ENCODE measurements at regions of chr5 and their contacts with region 1.

Region 1: DNA sequence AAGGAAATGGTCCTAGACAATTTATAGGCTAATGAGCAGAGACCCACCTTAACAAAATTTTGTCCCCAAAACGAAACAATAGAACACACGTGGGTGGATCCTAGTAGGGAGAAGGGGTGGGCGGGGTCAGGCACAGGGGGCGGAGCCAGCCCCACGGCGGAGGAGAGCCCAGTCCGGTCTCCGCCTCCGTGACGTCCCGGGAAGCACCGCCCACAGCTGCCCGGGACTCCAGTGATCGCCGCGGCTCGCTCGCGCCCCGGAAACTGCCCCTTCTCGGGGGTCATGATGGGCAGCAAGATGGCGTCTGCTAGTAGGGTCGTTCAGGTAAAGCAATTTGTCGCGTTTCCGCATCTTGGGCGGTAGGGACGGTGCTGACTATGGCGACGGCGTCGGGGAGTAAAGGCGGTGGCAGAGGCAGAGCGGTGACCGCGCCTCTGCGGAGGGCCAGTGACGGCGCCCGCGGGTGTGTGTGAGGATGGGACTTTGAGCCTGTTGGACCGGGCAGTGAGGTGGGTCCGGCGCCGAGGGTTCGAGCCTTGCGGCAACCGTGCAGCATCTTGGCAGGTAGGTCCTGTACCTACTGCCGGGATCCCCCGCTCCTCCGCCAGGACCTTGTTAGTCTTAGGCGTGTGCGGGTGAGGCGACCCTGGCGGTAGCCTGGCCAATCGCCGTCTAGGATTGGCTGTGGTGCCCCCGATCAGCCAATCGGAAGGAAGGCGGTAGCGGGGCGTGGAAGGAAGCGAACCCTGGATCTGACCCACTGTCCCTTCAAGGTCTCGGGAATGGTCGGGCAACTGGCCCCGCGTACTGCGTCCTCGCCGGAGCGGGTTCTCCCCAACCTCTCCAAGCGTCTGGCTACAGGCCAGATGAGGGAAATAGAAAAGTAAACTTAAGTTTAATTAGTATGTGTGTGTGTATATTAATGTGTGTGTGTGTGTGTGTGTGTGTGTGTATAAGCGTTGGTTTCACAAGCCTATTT is 16.8 kb upstream of the CDK7 start:
- DNase-seq: peak; percentile 72
- ATAC-seq: peak; percentile 97
- H3K4me3 ChIP-seq: peak overlapping the region; percentile 88
- H3K27ac ChIP-seq: peak overlapping the region; percentile 92
- H3K4me1 ChIP-seq: peaks cover 4% of the 10 kb centered on the region; the same call in 1 of the 2 replicates
- H3K27me3 ChIP-seq: no peaks in the 10 kb centered on the region
- CTCF ChIP-seq: peak in 1 of 3 experiments; percentile 5; a peak in 1 of 6 replicates
- EP300 ChIP-seq: no peak
- POLR2A ChIP-seq: peak; percentile 97
- RAD21 ChIP-seq: no peak

Region 2: DNA sequence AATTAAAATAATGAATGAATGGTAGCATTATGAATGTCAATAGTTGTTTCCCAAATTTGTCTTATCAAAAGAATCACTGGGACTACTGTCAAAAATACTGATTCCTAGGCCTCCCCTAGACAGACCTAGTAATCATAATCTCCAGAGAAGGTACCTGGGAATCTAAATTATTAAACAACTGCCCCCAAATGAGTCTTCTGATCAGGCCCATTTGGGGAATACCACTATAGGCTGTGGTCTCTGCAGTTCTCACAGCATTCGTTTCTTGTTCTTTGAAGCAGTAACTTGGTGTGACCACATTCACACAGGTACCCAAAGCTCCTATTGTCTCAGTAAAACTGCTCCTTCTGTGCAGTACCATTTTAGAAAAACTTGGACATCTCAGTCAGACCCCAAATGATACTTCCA is 771.3 kb before region 1 on chr5:
- CTCF ChIA-PET with region 1: no interaction called
- POLR2A ChIA-PET with region 1: no interaction called
- RAD21 ChIA-PET with region 1: no interaction called
- SMC1A ChIA-PET with region 1: no interaction called
- in situ Hi-C with region 1: no loop called
- intact Hi-C with region 1: no loop called
- DNase-seq: peak; percentile 87
- ATAC-seq: peak; percentile 94
- H3K4me3 ChIP-seq: no peak overlapping the region
- H3K27ac ChIP-seq: peak overlapping the region; percentile 77
- H3K4me1 ChIP-seq: peaks cover 21% of the 10 kb centered on the region
- H3K27me3 ChIP-seq: no peaks in the 10 kb centered on the region
- CTCF ChIP-seq: no peak
- EP300 ChIP-seq: peak; percentile 60 to 84; a peak in 3 of 4 replicates
- POLR2A ChIP-seq: no peak
- RAD21 ChIP-seq: peak; percentile 34

Region 3: DNA sequence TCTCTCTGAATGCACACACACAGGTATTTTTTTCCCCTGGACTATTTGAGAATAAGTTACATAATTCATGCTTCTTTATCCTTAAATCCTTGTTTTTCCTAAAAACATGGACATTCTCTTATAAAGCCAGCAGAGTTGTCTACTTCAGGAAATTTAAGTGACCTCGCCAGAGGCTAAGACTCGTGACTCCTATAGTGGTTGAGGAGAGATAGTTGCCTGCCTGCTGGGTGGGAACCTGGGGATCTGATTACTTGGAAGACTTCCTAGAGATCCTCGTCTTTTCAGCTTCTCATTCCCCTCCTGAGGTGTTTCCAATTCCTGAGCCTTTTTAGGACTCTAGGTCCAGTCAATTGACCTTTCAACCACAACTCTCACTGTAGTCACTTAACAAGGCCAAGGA is 118.5 kb before region 1 on chr5:
- CTCF ChIA-PET with region 1: no interaction called
- POLR2A ChIA-PET with region 1: no interaction called
- RAD21 ChIA-PET with region 1: no interaction called
- SMC1A ChIA-PET with region 1: interaction called, 3 read pairs
- in situ Hi-C with region 1: loop called (anchors 5 kb)
- intact Hi-C with region 1: no loop called
- DNase-seq: no peak
- ATAC-seq: no peak
- H3K4me3 ChIP-seq: no peak overlapping the region
- H3K27ac ChIP-seq: no peak overlapping the region
- H3K4me1 ChIP-seq: peaks cover 12% of the 10 kb centered on the region
- H3K27me3 ChIP-seq: no peaks in the 10 kb centered on the region
- CTCF ChIP-seq: no peak
- EP300 ChIP-seq: no peak
- POLR2A ChIP-seq: no peak
- RAD21 ChIP-seq: no peak

Region 4: DNA sequence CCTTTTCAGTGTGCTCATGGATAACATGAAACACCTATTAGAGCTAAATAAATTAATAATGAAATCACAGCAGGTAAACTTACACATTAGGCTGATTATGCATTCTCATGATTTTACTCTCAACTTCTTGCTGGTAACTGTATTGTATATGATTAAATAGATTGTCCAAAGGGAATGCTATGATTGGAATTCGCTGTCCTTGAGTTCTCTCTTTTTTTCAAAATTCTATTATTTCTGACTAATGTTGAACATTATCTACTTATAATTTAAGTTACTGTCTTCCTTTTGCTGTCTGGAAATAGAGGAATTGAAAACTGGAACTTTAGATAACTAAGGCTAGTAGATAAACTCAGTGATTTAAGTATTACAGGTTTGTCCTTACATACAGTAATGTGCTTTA is 15.3 kb before region 1 on chr5:
- CTCF ChIA-PET with region 1: no interaction called
- POLR2A ChIA-PET with region 1: no interaction called
- RAD21 ChIA-PET with region 1: no interaction called
- SMC1A ChIA-PET with region 1: no interaction called
- in situ Hi-C with region 1: no loop called
- intact Hi-C with region 1: no loop called
- DNase-seq: no peak
- ATAC-seq: no peak
- H3K4me3 ChIP-seq: no peak overlapping the region
- H3K27ac ChIP-seq: no peak overlapping the region
- H3K4me1 ChIP-seq: no peaks in the 10 kb centered on the region
- H3K27me3 ChIP-seq: no peaks in the 10 kb centered on the region
- CTCF ChIP-seq: no peak
- EP300 ChIP-seq: no peak
- POLR2A ChIP-seq: no peak
- RAD21 ChIP-seq: no peak

Region 5: GRCh38 chr5:69234457-69235268 is 16.8 kb after region 1 on chr5 and contains the start of gene CDK7:
- CTCF ChIA-PET with region 1: interaction called, 3 read pairs
- POLR2A ChIA-PET with region 1: interaction called, 4 read pairs
- RAD21 ChIA-PET with region 1: interaction called, 7 read pairs
- SMC1A ChIA-PET with region 1: interaction called, 8 read pairs
- in situ Hi-C with region 1: no loop called
- intact Hi-C with region 1: loop called (anchors 1 kb)
- DNase-seq: peak; percentile 77
- ATAC-seq: peak; percentile 99
- H3K4me3 ChIP-seq: peak within 1 kb of the TSS; percentile 78
- H3K27ac ChIP-seq: peak within 1 kb of the TSS; percentile 84
- H3K4me1 ChIP-seq: no peaks in the 10 kb centered on the region; the same call in 1 of the 2 replicates
- H3K27me3 ChIP-seq: no peaks in the 10 kb centered on the region
- CTCF ChIP-seq: no peak
- EP300 ChIP-seq: no peak
- POLR2A ChIP-seq: peak; percentile 88
- RAD21 ChIP-seq: no peak
- polyA plus RNA-seq, gene CDK7: 80.3 to 93.9 TPM